ENCODE measurements at regions of chr10 and their contacts with region 1.

Region 1: DNA sequence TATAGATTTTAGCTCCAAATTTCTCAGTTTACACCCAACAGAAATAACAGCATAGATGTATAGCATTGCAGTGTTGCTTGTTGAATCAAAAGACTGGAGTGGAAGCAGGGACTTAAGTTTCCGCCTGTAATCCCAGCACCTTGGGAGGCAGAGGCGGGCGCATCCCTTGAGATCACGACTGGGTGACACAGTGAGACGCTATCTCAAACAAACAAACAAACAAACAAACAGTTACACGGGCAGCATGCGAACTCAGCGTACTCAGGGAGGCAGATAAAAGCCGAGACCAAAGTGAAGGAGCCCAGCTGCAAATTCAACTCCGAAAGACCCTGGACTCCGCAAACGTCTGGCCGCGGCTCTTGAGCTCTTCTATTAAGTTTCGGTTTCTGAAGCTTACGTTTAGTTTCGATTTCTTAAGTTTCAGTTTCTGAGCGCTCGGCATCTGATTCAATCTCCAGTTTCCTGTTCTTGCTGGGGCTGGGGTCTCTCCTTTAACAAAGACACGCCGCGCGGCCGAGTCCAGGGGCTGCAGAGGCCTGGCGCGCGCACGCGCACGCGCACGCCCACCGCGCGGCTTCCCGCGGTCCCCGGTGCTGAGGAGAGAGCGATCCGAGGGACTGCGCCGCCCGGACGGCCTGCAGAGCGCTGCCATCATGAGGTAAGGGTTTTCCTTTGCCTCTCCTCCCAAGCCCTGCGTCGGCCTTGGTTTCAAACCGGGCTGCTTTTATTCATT is at the start of gene IFIT5:
- DNase-seq: peak; percentile 62 to 83 (median 76)
- ATAC-seq: peak; percentile 88
- H3K4me3 ChIP-seq: peak within 1 kb of the TSS; percentile 77
- H3K4me3 Mint-ChIP-seq: peak within 1 kb of the TSS; percentile 90 to 100 (median 96)
- H3K27ac ChIP-seq: peak within 1 kb of the TSS; percentile 94
- H3K27ac Mint-ChIP-seq: peak within 1 kb of the TSS; percentile 96 to 100 (median 98)
- H3K4me1 ChIP-seq: peaks cover 21% of the 10 kb centered on the region in 2 donors
- H3K4me1 Mint-ChIP-seq: peaks cover 26 to 75% (median 65%) of the 10 kb centered on the region in 7 donors
- H3K27me3 ChIP-seq: no peaks in the 10 kb centered on the region
- H3K27me3 Mint-ChIP-seq: no peaks in the 10 kb centered on the region
- total RNA-seq, gene IFIT5: 13.1 to 34.0 (median 24.8) TPM

Region 2: GRCh38 chr10:88835096-88835909 is 579.0 kb before region 1 on chr10:
- CTCF ChIA-PET with region 1: no interaction called
- POLR2A ChIA-PET with region 1: no interaction called
- intact Hi-C with region 1: loop called in 1 of 2 experiments (anchors 10 kb)
- DNase-seq: peak; percentile 65 to 86 (median 82)
- ATAC-seq: peak; percentile 95
- H3K4me3 ChIP-seq: no peak overlapping the region
- H3K4me3 Mint-ChIP-seq: no peak overlapping the region
- H3K27ac ChIP-seq: no peak overlapping the region
- H3K27ac Mint-ChIP-seq: no peak overlapping the region
- H3K4me1 ChIP-seq: peaks cover 14 to 46% of the 10 kb centered on the region in 2 donors
- H3K4me1 Mint-ChIP-seq: peaks cover 10 to 33% (median 32%) of the 10 kb centered on the region in 7 donors
- H3K27me3 ChIP-seq: no peaks in the 10 kb centered on the region
- H3K27me3 Mint-ChIP-seq: no peaks in the 10 kb centered on the region

Region 3: GRCh38 chr10:88983206-88983605 is 431.1 kb before region 1 on chr10:
- CTCF ChIA-PET with region 1: no interaction called
- POLR2A ChIA-PET with region 1: no interaction called
- intact Hi-C with region 1: no loop called
- DNase-seq: no peak
- ATAC-seq: peak; percentile 58
- H3K4me3 ChIP-seq: no peak overlapping the region
- H3K4me3 Mint-ChIP-seq: no peak overlapping the region
- H3K27ac ChIP-seq: no peak overlapping the region
- H3K27ac Mint-ChIP-seq: no peak overlapping the region
- H3K4me1 ChIP-seq: peaks cover 13 to 14% of the 10 kb centered on the region in 2 donors
- H3K4me1 Mint-ChIP-seq: peaks cover 16 to 40% (median 22%) of the 10 kb centered on the region in 7 donors
- H3K27me3 ChIP-seq: no peaks in the 10 kb centered on the region
- H3K27me3 Mint-ChIP-seq: peaks cover 0 to 3% (median 0%) of the 10 kb centered on the region in 5 donors

Region 4: GRCh38 chr10:89086801-89087521 is 327.4 kb before region 1 on chr10:
- CTCF ChIA-PET with region 1: no interaction called
- POLR2A ChIA-PET with region 1: no interaction called
- intact Hi-C with region 1: loop called (anchors 2 to 10 kb)
- DNase-seq: no peak
- ATAC-seq: peak; percentile 67
- H3K4me3 ChIP-seq: no peak overlapping the region
- H3K4me3 Mint-ChIP-seq: peak overlapping the region in 1 of 10 donors; percentile 16
- H3K27ac ChIP-seq: no peak overlapping the region
- H3K27ac Mint-ChIP-seq: peak overlapping the region in 1 of 9 donors; percentile 15
- H3K4me1 ChIP-seq: peaks cover 6 to 9% of the 10 kb centered on the region in 2 donors
- H3K4me1 Mint-ChIP-seq: peaks cover 0 to 15% (median 0%) of the 10 kb centered on the region in 7 donors
- H3K27me3 ChIP-seq: no peaks in the 10 kb centered on the region
- H3K27me3 Mint-ChIP-seq: peaks cover 0 to 8% (median 0%) of the 10 kb centered on the region in 5 donors

Region 5: DNA sequence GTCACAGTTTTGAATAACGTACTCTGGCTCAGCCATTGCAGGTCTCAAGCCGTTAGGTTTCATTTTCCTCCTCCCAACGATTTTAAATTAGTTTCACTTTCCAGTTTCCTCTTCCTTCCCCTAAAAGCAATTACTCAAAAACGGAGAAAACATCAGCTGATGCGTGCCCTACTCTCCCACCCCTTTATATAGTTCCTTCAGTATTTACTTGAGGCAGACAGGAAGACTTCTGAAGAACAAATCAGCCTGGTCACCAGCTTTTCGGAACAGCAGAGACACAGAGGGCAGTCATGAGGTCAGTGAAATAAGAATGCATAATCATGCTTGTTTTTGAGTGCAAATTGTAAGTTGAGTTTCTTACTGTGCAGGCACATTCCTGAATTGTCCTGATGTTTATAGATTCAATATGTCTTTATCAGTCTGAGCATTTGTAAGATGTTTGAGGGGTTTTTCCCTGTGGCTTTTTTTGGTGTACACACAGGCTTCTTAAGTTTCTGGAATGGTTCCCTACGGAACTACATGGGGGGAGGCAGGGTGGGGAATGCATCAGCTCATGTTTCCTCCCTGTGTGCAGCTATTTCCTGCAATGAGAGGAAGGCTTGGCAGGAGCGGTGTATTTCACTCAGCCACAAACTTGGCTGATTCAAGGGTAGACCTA is 86.4 kb before region 1 on chr10 and contains the start of gene IFIT3:
- CTCF ChIA-PET with region 1: no interaction called
- POLR2A ChIA-PET with region 1: interaction called, 3 read pairs
- intact Hi-C with region 1: loop called in 1 of 2 experiments (anchors 1 kb)
- DNase-seq: peak in 7 of 9 donors; percentile 22 to 42 (median 30)
- ATAC-seq: peak; percentile 65
- H3K4me3 ChIP-seq: peak within 1 kb of the TSS; percentile 68
- H3K4me3 Mint-ChIP-seq: peak within 1 kb of the TSS; percentile 80 to 94 (median 90)
- H3K27ac ChIP-seq: peak within 1 kb of the TSS; percentile 62
- H3K27ac Mint-ChIP-seq: peak within 1 kb of the TSS; percentile 70 to 94 (median 87)
- H3K4me1 ChIP-seq: peaks cover 14 to 25% of the 10 kb centered on the region in 2 donors
- H3K4me1 Mint-ChIP-seq: peaks cover 26 to 59% (median 54%) of the 10 kb centered on the region in 7 donors
- H3K27me3 ChIP-seq: no peaks in the 10 kb centered on the region
- H3K27me3 Mint-ChIP-seq: peaks cover 0 to 16% (median 0%) of the 10 kb centered on the region in 5 donors
- total RNA-seq, gene IFIT3: 1.8 to 22.3 (median 3.2) TPM

Region 6: DNA sequence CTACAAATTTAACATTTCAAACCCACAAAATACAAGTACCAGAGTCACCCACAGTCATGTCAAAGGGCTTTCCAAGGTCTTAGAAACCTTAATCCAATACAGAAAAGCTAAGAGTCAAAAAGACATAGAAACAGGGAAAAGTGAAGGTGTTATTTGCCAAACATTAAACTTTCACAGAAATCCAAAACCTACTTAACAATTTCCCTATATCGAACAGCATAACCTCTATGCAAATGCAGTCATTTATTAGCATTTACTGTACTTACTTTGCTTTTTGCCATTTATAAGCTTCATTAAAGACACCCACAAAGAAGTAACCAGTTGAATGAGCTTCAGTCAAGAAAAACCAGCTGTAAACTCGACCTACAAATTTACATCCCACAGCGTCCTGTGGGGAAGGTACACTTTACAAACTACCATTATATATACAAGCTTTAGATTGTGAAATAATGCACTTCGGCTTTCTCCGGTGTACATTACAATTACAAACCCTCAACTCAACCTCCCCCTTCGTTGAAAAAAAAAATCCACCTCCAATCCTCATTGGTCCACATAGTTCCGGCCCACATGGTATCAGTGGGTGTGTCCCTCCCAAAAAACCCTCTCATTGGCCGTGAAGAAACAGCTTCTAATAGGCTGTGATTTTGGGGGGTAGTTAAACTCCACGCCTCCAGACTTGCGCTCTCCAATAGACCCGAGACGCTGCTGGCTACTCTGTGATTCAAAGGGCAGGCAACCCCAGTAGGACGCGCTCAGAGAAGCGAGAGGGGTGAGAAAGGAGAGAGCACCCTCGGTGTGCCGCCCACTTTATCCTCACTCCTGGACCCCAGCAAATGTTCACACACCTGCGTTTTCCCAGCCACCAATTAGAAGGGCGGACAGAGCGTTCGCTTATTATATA is 229.4 kb after region 1 on chr10:
- CTCF ChIA-PET with region 1: no interaction called
- POLR2A ChIA-PET with region 1: interaction called, 3 read pairs
- intact Hi-C with region 1: loop called (anchors 1 to 2 kb)
- DNase-seq: peak; percentile 22 to 78 (median 68)
- ATAC-seq: peak; percentile 94
- H3K4me3 ChIP-seq: peak overlapping the region; percentile 76
- H3K4me3 Mint-ChIP-seq: no peak overlapping the region
- H3K27ac ChIP-seq: peak overlapping the region; percentile 55
- H3K27ac Mint-ChIP-seq: peak overlapping the region in 2 of 9 donors; percentile 4 to 72
- H3K4me1 ChIP-seq: peaks cover 0 to 6% of the 10 kb centered on the region in 2 donors
- H3K4me1 Mint-ChIP-seq: peaks cover 6 to 13% (median 8%) of the 10 kb centered on the region in 7 donors
- H3K27me3 ChIP-seq: no peaks in the 10 kb centered on the region
- H3K27me3 Mint-ChIP-seq: peaks cover 0 to 23% (median 6%) of the 10 kb centered on the region in 5 donors